CD4-positive, alpha-beta T cell (primary cell): ENCODE measurements at regions of chr3 and their contacts with region 1.

Region 1: DNA sequence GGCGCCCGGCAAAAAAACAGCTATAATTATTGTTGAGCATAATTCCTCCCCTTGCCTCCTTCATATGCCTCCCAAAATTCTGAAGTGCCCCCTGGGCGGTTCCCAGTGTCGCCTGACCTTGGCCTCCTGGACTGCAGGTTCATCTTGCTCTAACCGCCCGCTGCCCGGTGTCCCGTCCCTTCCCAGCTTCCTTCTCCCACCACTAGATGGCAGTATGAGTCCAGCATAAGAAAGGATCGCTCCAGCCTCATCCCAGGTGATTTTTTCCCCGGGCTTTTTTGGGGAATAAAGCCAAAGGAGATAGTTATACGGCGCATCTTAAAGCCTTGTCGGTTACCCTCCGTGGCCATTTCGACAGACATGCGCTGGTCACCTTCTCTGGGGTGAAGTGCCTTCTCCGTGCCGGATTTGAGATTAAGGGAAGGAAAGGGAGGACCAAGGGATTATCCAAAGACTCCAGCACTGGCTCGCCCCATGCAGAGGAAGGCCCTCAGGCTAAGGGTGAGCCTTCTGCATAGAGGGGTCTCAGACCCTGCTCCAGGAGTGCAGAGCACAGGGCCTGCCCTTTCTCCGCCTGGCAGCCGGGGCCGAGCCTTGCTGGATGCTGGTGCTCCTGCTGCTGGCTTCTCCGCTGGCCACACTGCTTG is 45.8 kb upstream of the TRA2B start:
- DNase-seq: peak; percentile 27 to 79 (median 42)
- ATAC-seq: peak; percentile 68
- H3K4me3 ChIP-seq: no peak overlapping the region
- H3K4me3 Mint-ChIP-seq: no peak overlapping the region
- H3K27ac ChIP-seq: no peak overlapping the region
- H3K27ac Mint-ChIP-seq: no peak overlapping the region
- H3K4me1 ChIP-seq: peaks cover 8% of the 10 kb centered on the region
- H3K4me1 Mint-ChIP-seq: no peaks in the 10 kb centered on the region
- H3K27me3 ChIP-seq: no peaks in the 10 kb centered on the region
- H3K27me3 Mint-ChIP-seq: peaks cover 5% of the 10 kb centered on the region
- CTCF ChIP-seq: peak; percentile 94

Region 2: DNA sequence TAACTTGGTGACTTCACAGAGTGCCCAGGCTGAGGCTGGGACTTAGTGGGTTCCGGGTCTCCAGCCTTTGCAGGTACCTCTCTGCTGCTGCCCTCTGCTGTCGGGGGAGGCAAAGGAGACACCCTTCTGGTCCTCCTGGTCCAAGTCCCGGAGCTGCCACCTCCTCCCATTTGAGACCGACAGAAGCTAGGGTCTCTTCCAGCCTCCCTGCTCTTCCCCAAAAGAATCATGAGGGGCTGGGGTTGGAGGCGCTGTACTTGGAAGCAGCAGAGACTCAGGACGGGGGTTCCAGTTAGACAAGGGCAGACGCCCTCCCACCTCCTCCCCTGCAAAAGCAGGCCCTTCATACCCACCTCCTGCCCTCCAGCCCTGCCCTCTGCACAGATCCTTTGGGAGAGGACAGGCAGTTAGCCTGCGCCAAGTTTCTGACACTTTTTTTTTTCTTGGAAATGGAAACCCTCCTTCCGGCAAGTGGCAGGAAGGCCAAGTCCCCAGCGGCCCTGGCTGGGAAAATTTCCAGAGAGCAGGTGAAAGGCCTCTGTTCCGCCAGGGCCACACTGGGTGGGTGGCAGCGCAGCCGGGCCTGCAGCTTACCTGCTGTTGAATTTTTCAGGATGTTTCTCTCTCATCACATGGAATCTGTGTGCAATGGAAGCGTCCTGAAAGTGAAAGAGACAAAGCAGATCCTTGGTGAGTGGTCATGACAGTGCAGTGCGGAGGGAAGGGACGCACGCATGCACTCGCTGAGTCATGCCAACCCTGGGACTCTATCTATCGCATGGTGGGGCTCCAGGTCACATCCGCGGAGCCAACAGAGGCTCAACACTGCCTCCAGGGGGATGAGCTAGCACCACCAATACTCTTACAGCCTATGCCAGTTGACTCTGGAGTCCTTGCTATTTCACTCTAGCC is 258.5 kb after region 1 on chr3:
- CTCF ChIA-PET with region 1: no interaction called
- POLR2A ChIA-PET with region 1: no interaction called
- intact Hi-C with region 1: loop called (anchors 2 to 5 kb)
- DNase-seq: peak in 7 of 14 experiments; percentile 8 to 60 (median 35)
- ATAC-seq: peak; percentile 82
- H3K4me3 ChIP-seq: no peak overlapping the region
- H3K4me3 Mint-ChIP-seq: no peak overlapping the region
- H3K27ac ChIP-seq: no peak overlapping the region
- H3K27ac Mint-ChIP-seq: no peak overlapping the region
- H3K4me1 ChIP-seq: peaks cover 10% of the 10 kb centered on the region
- H3K4me1 Mint-ChIP-seq: no peaks in the 10 kb centered on the region
- H3K27me3 ChIP-seq: peaks cover 0 to 2% of the 10 kb centered on the region in 2 experiments
- H3K27me3 Mint-ChIP-seq: peaks cover 15% of the 10 kb centered on the region
- CTCF ChIP-seq: no peak

Region 3: GRCh38 chr3:186259612-186260383 is 276.2 kb after region 1 on chr3:
- CTCF ChIA-PET with region 1: interaction called, 3 read pairs
- POLR2A ChIA-PET with region 1: no interaction called
- intact Hi-C with region 1: loop called in 1 of 2 experiments (anchors 5 kb)
- DNase-seq: peak; percentile 26 to 81 (median 58)
- ATAC-seq: peak; percentile 95
- H3K4me3 ChIP-seq: no peak overlapping the region
- H3K4me3 Mint-ChIP-seq: no peak overlapping the region
- H3K27ac ChIP-seq: no peak overlapping the region
- H3K27ac Mint-ChIP-seq: no peak overlapping the region
- H3K4me1 ChIP-seq: peaks cover 14% of the 10 kb centered on the region
- H3K4me1 Mint-ChIP-seq: peaks cover 15% of the 10 kb centered on the region
- H3K27me3 ChIP-seq: no peaks in the 10 kb centered on the region
- H3K27me3 Mint-ChIP-seq: no peaks in the 10 kb centered on the region
- CTCF ChIP-seq: peak; percentile 76

Region 4: GRCh38 chr3:186281176-186281575 is 297.6 kb after region 1 on chr3:
- CTCF ChIA-PET with region 1: no interaction called
- POLR2A ChIA-PET with region 1: no interaction called
- intact Hi-C with region 1: no loop called
- DNase-seq: no peak
- ATAC-seq: no peak
- H3K4me3 ChIP-seq: no peak overlapping the region
- H3K4me3 Mint-ChIP-seq: no peak overlapping the region
- H3K27ac ChIP-seq: no peak overlapping the region
- H3K27ac Mint-ChIP-seq: no peak overlapping the region
- H3K4me1 ChIP-seq: no peaks in the 10 kb centered on the region
- H3K4me1 Mint-ChIP-seq: no peaks in the 10 kb centered on the region
- H3K27me3 ChIP-seq: peaks cover 0 to 2% of the 10 kb centered on the region in 2 experiments
- H3K27me3 Mint-ChIP-seq: peaks cover 5% of the 10 kb centered on the region
- CTCF ChIP-seq: no peak

Region 5: DNA sequence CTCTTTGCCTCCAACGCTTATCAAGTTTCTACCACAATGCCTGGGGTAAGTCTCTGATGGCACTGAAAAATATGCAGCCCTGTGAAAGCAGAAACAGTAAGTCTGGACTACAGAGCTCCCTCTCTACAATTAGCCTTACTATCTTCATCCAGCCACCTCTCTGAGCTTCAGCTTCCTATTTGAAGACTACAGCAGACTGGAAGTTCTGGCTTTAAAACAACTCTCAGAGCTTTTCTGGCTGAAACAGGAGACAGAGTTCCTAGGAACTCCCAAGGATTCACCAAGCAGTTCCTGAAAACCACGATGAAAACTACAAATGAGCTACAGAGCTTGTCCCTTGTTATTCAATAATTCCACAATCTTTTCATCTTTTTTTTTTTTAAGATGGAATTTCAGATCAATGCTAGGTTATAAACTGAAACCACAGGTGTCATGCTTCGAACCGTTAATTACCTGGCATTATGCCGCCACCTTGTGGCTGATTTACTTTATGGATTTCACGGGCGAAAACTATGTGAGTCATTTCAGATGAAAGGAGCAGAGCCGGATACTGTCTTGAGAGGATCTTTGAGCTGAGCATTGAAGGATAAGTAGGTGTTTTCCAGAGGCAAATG is 556.7 kb after region 1 on chr3:
- CTCF ChIA-PET with region 1: interaction called, 14 read pairs
- POLR2A ChIA-PET with region 1: interaction called, 3 read pairs
- intact Hi-C with region 1: loop called (anchors 1 kb)
- DNase-seq: peak; percentile 66 to 92 (median 80)
- ATAC-seq: peak; percentile 98
- H3K4me3 ChIP-seq: no peak overlapping the region
- H3K4me3 Mint-ChIP-seq: no peak overlapping the region
- H3K27ac ChIP-seq: no peak overlapping the region
- H3K27ac Mint-ChIP-seq: no peak overlapping the region
- H3K4me1 ChIP-seq: peaks cover 4% of the 10 kb centered on the region
- H3K4me1 Mint-ChIP-seq: peaks cover 7% of the 10 kb centered on the region
- H3K27me3 ChIP-seq: no peaks in the 10 kb centered on the region
- H3K27me3 Mint-ChIP-seq: no peaks in the 10 kb centered on the region
- CTCF ChIP-seq: peak; percentile 84

Region 6: DNA sequence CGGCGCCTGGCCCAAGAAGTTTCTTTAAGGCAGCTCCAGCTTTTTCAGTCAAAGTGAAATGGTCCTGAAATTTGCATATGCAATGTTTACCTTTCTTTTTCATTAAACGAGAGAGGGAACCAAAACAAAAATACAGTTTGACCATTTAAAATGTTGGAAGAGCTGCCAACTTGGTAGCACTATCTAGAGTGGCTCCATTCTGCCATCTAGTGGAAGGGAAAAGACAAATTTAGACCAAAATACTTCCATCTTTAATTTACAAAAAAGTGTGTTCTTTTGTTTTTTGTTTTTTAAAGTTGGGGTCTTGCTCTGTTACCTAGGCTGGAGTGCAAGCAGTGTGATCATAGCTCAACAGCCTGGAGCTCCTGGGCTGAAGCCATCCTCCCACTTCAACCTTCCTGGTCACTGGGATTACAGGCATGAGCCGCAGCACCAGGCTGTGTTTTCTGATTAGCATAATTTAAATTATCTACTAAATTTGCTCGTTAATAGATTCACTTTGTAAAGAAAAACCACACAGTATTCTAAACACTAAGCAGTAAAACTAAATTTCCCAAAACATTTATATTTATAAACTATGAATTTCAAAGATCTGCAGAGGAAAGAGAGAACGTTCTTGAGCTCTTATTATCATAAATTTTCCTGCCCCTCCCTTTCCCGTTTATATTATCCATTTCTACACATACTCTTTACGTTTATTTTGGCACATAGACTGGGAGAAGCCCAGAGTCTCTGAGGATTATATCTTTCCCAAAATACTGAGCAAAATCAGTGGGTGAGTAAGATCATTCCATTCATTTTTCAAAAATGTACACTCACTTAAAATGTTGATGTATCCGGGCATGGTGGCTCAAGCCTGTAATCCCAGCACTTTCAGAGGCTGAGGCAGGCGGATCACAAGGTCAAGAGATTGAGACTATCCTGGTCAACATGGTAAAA is 838.1 kb after region 1 on chr3:
- CTCF ChIA-PET with region 1: no interaction called
- POLR2A ChIA-PET with region 1: no interaction called
- intact Hi-C with region 1: loop called (anchors 2 to 10 kb)
- DNase-seq: peak in 4 of 14 experiments; percentile 31 to 75 (median 70)
- ATAC-seq: no peak
- H3K4me3 ChIP-seq: no peak overlapping the region
- H3K4me3 Mint-ChIP-seq: no peak overlapping the region
- H3K27ac ChIP-seq: no peak overlapping the region
- H3K27ac Mint-ChIP-seq: no peak overlapping the region
- H3K4me1 ChIP-seq: peaks cover 16% of the 10 kb centered on the region
- H3K4me1 Mint-ChIP-seq: peaks cover 14% of the 10 kb centered on the region
- H3K27me3 ChIP-seq: peaks cover 20 to 25% of the 10 kb centered on the region in 2 experiments
- H3K27me3 Mint-ChIP-seq: peaks cover 20% of the 10 kb centered on the region
- CTCF ChIP-seq: peak; percentile 78

Region 7: GRCh38 chr3:186826976-186827731 is 843.5 kb after region 1 on chr3:
- CTCF ChIA-PET with region 1: no interaction called
- POLR2A ChIA-PET with region 1: no interaction called
- intact Hi-C with region 1: loop called in 1 of 2 experiments (anchors 10 kb)
- DNase-seq: peak; percentile 68 to 96 (median 82)
- ATAC-seq: peak; percentile 92
- H3K4me3 ChIP-seq: peak overlapping the region; percentile 60
- H3K4me3 Mint-ChIP-seq: peak overlapping the region; percentile 76
- H3K27ac ChIP-seq: no peak overlapping the region
- H3K27ac Mint-ChIP-seq: no peak overlapping the region
- H3K4me1 ChIP-seq: peaks cover 27% of the 10 kb centered on the region
- H3K4me1 Mint-ChIP-seq: peaks cover 23% of the 10 kb centered on the region
- H3K27me3 ChIP-seq: peaks cover 37 to 65% of the 10 kb centered on the region in 2 experiments
- H3K27me3 Mint-ChIP-seq: peaks cover 65% of the 10 kb centered on the region
- CTCF ChIP-seq: no peak